Naive thymus-derived CD4-positive, alpha-beta T cell (primary cell): ENCODE measurements at regions of chr6 and their contacts with region 1.

Region 1: DNA sequence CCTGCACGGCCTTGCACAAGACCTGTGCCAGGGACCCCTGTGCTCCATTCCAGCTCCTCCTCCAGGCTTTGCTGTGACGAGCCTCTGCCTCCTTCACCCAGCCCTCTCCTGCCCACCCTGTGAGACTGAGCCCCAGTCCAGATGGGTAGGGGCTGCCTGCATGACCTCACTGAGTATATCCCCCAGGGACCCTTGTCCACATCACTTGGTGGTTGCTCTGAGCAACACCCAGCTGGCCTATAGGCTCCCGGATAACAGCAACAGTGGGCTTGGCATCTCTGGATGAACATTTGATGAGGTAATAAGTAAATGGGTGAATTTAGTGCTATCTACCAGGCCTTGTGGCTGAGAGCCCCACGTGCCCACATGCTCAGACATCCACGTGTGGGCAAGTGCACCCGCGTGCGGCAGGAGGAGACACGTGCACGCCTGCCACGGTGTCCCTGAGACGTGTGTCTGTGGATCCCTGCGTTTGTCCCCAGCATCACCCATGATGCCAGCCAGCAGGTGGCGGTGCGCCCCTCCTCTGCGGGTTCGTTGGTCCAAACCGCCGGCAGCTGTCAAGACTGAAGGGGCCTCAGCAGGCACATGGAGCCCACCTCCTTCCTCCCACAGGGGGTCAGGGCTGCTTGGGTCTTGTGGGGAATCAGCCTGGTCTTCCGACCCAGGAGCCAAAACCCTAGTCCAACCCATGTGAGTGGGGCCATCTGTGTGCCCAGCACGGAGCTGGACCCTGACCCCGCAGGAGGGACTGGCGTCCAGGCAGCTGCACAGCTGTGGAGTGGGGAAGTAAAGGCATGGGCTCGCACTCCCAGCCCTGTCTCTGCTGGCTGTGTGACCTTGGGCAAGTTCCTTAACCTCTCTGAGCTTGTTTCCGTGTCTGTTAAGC is 45.9 kb downstream of the FGD2 start:
- DNase-seq: peak; percentile 73 to 87 (median 83)
- ATAC-seq: peak; percentile 83
- H3K4me3 ChIP-seq: peak overlapping the region; percentile 58
- H3K4me3 Mint-ChIP-seq: peak overlapping the region; percentile 66 to 94 (median 72)
- H3K27ac ChIP-seq: peak overlapping the region; percentile 75
- H3K27ac Mint-ChIP-seq: peak overlapping the region; percentile 84 to 99 (median 92)
- H3K4me1 ChIP-seq: peaks cover 46 to 56% of the 10 kb centered on the region in 2 donors
- H3K4me1 Mint-ChIP-seq: peaks cover 49 to 70% (median 57%) of the 10 kb centered on the region in 7 donors
- H3K27me3 ChIP-seq: no peaks in the 10 kb centered on the region
- H3K27me3 Mint-ChIP-seq: no peaks in the 10 kb centered on the region

Region 2: GRCh38 chr6:35980991-35981660 is 1070.3 kb before region 1 on chr6:
- CTCF ChIA-PET with region 1: no interaction called
- POLR2A ChIA-PET with region 1: no interaction called
- intact Hi-C with region 1: no loop called
- DNase-seq: no peak
- ATAC-seq: no peak
- H3K4me3 ChIP-seq: no peak overlapping the region
- H3K4me3 Mint-ChIP-seq: no peak overlapping the region
- H3K27ac ChIP-seq: no peak overlapping the region
- H3K27ac Mint-ChIP-seq: no peak overlapping the region
- H3K4me1 ChIP-seq: no peaks in the 10 kb centered on the region
- H3K4me1 Mint-ChIP-seq: no peaks in the 10 kb centered on the region
- H3K27me3 ChIP-seq: no peaks in the 10 kb centered on the region
- H3K27me3 Mint-ChIP-seq: peaks cover 0 to 27% (median 0%) of the 10 kb centered on the region in 5 donors

Region 3: GRCh38 chr6:36912586-36912985 is 138.8 kb before region 1 on chr6:
- CTCF ChIA-PET with region 1: no interaction called
- POLR2A ChIA-PET with region 1: no interaction called
- intact Hi-C with region 1: loop called in 1 of 2 experiments (anchors 1 kb)
- DNase-seq: peak in 8 of 9 donors; percentile 54 to 81 (median 72)
- ATAC-seq: peak; percentile 94
- H3K4me3 ChIP-seq: peak overlapping the region; percentile 32
- H3K4me3 Mint-ChIP-seq: peak overlapping the region; percentile 60 to 84 (median 74)
- H3K27ac ChIP-seq: peak overlapping the region; percentile 44
- H3K27ac Mint-ChIP-seq: peak overlapping the region; percentile 73 to 97 (median 92)
- H3K4me1 ChIP-seq: peaks cover 23% of the 10 kb centered on the region in 2 donors
- H3K4me1 Mint-ChIP-seq: peaks cover 18 to 69% (median 38%) of the 10 kb centered on the region in 7 donors
- H3K27me3 ChIP-seq: no peaks in the 10 kb centered on the region
- H3K27me3 Mint-ChIP-seq: no peaks in the 10 kb centered on the region

Region 4: GRCh38 chr6:36924131-36924530 is 127.3 kb before region 1 on chr6:
- CTCF ChIA-PET with region 1: no interaction called
- POLR2A ChIA-PET with region 1: no interaction called
- intact Hi-C with region 1: no loop called
- DNase-seq: no peak
- ATAC-seq: no peak
- H3K4me3 ChIP-seq: no peak overlapping the region
- H3K4me3 Mint-ChIP-seq: peak overlapping the region in 1 of 10 donors; percentile 44
- H3K27ac ChIP-seq: no peak overlapping the region
- H3K27ac Mint-ChIP-seq: peak overlapping the region in 5 of 9 donors; percentile 14 to 77 (median 45)
- H3K4me1 ChIP-seq: no peaks in the 10 kb centered on the region
- H3K4me1 Mint-ChIP-seq: peaks cover 0 to 31% (median 0%) of the 10 kb centered on the region in 7 donors
- H3K27me3 ChIP-seq: no peaks in the 10 kb centered on the region
- H3K27me3 Mint-ChIP-seq: no peaks in the 10 kb centered on the region

Region 5: GRCh38 chr6:36985808-36986703 is 65.3 kb before region 1 on chr6 and contains the start of gene MTCH1:
- CTCF ChIA-PET with region 1: no interaction called
- POLR2A ChIA-PET with region 1: interaction called, 3 read pairs
- intact Hi-C with region 1: loop called in 1 of 2 experiments (anchors 5 kb)
- DNase-seq: peak; percentile 85 to 98 (median 92)
- ATAC-seq: peak; percentile 93
- H3K4me3 ChIP-seq: peak within 1 kb of the TSS; percentile 98
- H3K4me3 Mint-ChIP-seq: peak within 1 kb of the TSS in 6 of 10 donors; percentile 98 to 100 (median 100)
- H3K27ac ChIP-seq: peak within 1 kb of the TSS; percentile 96
- H3K27ac Mint-ChIP-seq: peak within 1 kb of the TSS in 7 of 9 donors; percentile 98 to 99 (median 99)
- H3K4me1 ChIP-seq: peaks cover 22 to 27% of the 10 kb centered on the region in 2 donors
- H3K4me1 Mint-ChIP-seq: peaks cover 12 to 26% (median 18%) of the 10 kb centered on the region in 7 donors
- H3K27me3 ChIP-seq: no peaks in the 10 kb centered on the region
- H3K27me3 Mint-ChIP-seq: peaks cover 0 to 17% (median 0%) of the 10 kb centered on the region in 5 donors
- total RNA-seq, gene MTCH1: 123 to 198 (median 130) TPM

Region 6: GRCh38 chr6:37029249-37029971 is 22.0 kb before region 1 on chr6:
- CTCF ChIA-PET with region 1: interaction called, 178 read pairs
- POLR2A ChIA-PET with region 1: interaction called, 12 read pairs
- intact Hi-C with region 1: loop called (anchors 1 kb)
- DNase-seq: peak in 1 of 9 donors; percentile 54
- ATAC-seq: peak; percentile 92
- H3K4me3 ChIP-seq: no peak overlapping the region
- H3K4me3 Mint-ChIP-seq: peak overlapping the region in 1 of 10 donors; percentile 23
- H3K27ac ChIP-seq: no peak overlapping the region
- H3K27ac Mint-ChIP-seq: peak overlapping the region in 3 of 9 donors; percentile 22 to 84 (median 23)
- H3K4me1 ChIP-seq: peaks cover 5 to 14% of the 10 kb centered on the region in 2 donors
- H3K4me1 Mint-ChIP-seq: peaks cover 4 to 70% (median 14%) of the 10 kb centered on the region in 7 donors
- H3K27me3 ChIP-seq: no peaks in the 10 kb centered on the region
- H3K27me3 Mint-ChIP-seq: no peaks in the 10 kb centered on the region

Region 7: GRCh38 chr6:37102279-37103168 is 51.1 kb after region 1 on chr6:
- CTCF ChIA-PET with region 1: interaction called, 5 read pairs
- POLR2A ChIA-PET with region 1: no interaction called
- intact Hi-C with region 1: loop called (anchors 1 kb)
- DNase-seq: peak; percentile 59 to 79 (median 75)
- ATAC-seq: peak; percentile 92
- H3K4me3 ChIP-seq: peak overlapping the region; percentile 47
- H3K4me3 Mint-ChIP-seq: peak overlapping the region; percentile 74 to 86 (median 80)
- H3K27ac ChIP-seq: peak overlapping the region; percentile 46
- H3K27ac Mint-ChIP-seq: peak overlapping the region; percentile 48 to 92 (median 87)
- H3K4me1 ChIP-seq: peaks cover 14 to 19% of the 10 kb centered on the region in 2 donors
- H3K4me1 Mint-ChIP-seq: peaks cover 16 to 55% (median 32%) of the 10 kb centered on the region in 7 donors
- H3K27me3 ChIP-seq: no peaks in the 10 kb centered on the region
- H3K27me3 Mint-ChIP-seq: no peaks in the 10 kb centered on the region

Region 8: GRCh38 chr6:37182736-37183590 is 131.6 kb after region 1 on chr6:
- CTCF ChIA-PET with region 1: interaction called, 8 read pairs
- POLR2A ChIA-PET with region 1: interaction called, 177 read pairs
- intact Hi-C with region 1: loop called in 1 of 2 experiments (anchors 1 kb)
- DNase-seq: peak in 8 of 9 donors; percentile 56 to 85 (median 70)
- ATAC-seq: peak; percentile 97
- H3K4me3 ChIP-seq: peak overlapping the region; percentile 41
- H3K4me3 Mint-ChIP-seq: peak overlapping the region; percentile 62 to 86 (median 72)
- H3K27ac ChIP-seq: peak overlapping the region; percentile 73
- H3K27ac Mint-ChIP-seq: peak overlapping the region; percentile 88 to 98 (median 94)
- H3K4me1 ChIP-seq: peaks cover 44 to 61% of the 10 kb centered on the region in 2 donors
- H3K4me1 Mint-ChIP-seq: peaks cover 21 to 72% (median 63%) of the 10 kb centered on the region in 7 donors
- H3K27me3 ChIP-seq: no peaks in the 10 kb centered on the region
- H3K27me3 Mint-ChIP-seq: no peaks in the 10 kb centered on the region